Tibial artery (tissue), 4 donors: ENCODE measurements at regions of chr2 and their contacts with region 1.

Region 1: GRCh38 chr2:133405252-133405651 is 163.0 kb downstream of the NCKAP5 start:
- DNase-seq: no peak
- H3K4me3 ChIP-seq: no peak overlapping the region
- H3K27ac ChIP-seq: no peak overlapping the region
- H3K4me1 ChIP-seq: no peaks in the 10 kb centered on the region
- H3K27me3 ChIP-seq: no peaks in the 10 kb centered on the region
- CTCF ChIP-seq: no peak

Region 2: GRCh38 chr2:131445896-131446295 is 1959.4 kb before region 1 on chr2:
- intact Hi-C with region 1: no loop called
- DNase-seq: no peak
- H3K4me3 ChIP-seq: no peak overlapping the region
- H3K27ac ChIP-seq: no peak overlapping the region
- H3K4me1 ChIP-seq: no peaks in the 10 kb centered on the region
- H3K27me3 ChIP-seq: peaks cover 0 to 2% of the 10 kb centered on the region in 2 donors
- CTCF ChIP-seq: no peak

Region 3: DNA sequence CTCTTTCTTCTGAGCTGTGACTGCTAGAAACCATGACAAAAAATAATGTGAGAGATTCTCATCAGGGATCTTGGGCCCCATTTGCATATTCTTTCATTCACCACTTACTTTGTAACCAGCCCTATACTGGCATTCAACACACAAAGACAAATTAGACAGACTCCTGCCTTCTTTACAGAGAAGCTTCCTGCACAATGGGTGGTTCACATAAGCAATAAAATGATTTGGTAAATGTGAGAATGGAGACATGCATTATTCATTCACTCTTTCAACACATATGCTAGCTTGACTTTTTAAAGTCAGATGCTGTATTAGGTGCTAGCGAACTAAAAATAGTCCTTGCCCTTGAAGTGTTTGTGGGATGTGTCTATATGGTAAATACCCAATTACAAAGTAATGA is 11.3 kb before region 1 on chr2:
- intact Hi-C with region 1: loop called (anchors 1 kb)
- DNase-seq: no peak
- H3K4me3 ChIP-seq: no peak overlapping the region
- H3K27ac ChIP-seq: no peak overlapping the region
- H3K4me1 ChIP-seq: no peaks in the 10 kb centered on the region
- H3K27me3 ChIP-seq: no peaks in the 10 kb centered on the region
- CTCF ChIP-seq: no peak